Activated naive CD4-positive, alpha-beta T cell treated with anti-CD3 and anti-CD28 coated beads for 36 hours (primary cell): ENCODE measurements at regions of chr2 and their contacts with region 1.

Region 1: DNA sequence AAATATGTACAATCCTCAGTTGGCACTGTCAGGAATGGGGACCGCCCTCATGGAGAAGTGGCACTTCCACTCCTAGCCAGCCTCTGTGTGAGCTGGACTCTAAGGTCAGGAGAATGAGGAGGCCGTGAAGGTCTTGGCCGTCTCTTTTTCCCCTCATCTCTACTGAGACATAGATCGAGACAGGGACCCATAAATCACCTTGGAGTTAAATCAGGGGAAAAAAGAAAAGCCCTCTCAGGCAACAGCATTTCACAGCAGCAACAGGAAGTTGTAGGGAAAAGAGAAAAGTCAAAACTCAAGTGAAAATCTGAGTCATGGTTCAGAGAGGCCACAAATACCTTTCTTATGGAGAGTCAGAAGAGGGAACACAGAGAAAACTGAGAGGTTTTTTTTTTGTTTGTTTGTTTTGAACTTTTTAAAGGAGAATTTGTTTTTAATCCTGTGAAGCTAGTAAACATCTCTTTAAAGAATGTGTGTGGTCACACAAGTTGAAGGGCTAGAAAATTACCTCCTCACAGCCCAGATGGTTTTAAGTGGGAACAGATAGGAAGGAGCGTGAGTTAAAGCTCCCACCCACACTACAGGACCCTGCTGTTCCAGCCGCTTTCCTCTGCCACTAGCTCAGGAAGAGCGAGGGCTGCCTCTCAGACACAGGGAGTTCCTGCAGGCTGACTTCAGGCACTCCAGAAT is 30.6 kb upstream of the CYP1B1 start:
- DNase-seq: no peak
- H3K4me3 Mint-ChIP-seq: no peak overlapping the region
- H3K27ac Mint-ChIP-seq: no peak overlapping the region
- H3K4me1 Mint-ChIP-seq: peaks cover 14% of the 10 kb centered on the region
- H3K27me3 Mint-ChIP-seq: peaks cover 29% of the 10 kb centered on the region

Region 2: DNA sequence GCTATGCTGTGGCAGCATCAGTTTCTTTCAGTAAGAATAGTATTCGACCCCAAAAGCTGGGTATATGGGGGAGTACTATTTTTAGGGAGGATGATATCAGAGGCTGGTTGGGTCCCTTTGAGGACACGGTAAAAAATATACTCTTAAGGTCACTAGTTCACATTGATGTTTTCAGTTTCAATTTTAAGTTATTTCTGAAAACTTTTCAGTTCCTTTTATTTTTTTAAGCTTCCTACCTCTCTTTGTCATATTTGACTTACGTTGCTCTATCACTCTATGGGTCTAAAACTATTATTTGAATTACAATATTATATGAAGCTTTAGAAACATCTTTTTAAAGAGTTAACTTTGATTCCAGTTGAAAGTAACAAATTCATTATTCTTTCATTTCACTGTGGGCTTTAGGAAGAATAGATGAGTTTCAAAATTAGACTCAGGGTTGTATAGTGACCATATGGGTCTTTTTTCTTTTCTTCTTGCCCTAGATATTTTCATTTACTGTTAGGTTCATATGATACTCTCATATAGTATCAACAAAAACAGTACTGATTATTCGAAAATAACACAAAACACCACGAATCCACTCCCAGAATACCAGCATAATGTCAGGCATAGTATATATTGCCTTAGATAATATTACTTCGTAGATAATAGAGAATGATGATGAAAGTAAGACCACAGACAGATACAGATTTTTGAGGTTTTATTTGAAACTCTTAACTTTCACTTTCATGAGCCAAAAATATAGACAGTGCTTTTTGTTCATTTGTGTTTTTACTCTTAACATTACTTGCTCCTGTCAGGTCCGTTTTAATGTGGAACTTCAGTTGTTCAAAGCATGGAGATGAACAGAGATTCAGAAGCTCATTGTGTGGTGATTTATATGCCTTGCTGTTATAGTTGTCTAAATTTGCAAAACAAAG is 171.7 kb before region 1 on chr2:
- CTCF ChIA-PET with region 1: no interaction called
- intact Hi-C with region 1: loop called (anchors 1 kb)
- DNase-seq: no peak
- H3K4me3 Mint-ChIP-seq: peak overlapping the region; percentile 42
- H3K27ac Mint-ChIP-seq: no peak overlapping the region
- H3K4me1 Mint-ChIP-seq: peaks cover 25% of the 10 kb centered on the region
- H3K27me3 Mint-ChIP-seq: peaks cover 2% of the 10 kb centered on the region

Region 3: GRCh38 chr2:38037757-38038621 is 68.6 kb before region 1 on chr2:
- CTCF ChIA-PET with region 1: no interaction called
- intact Hi-C with region 1: loop called (anchors 1 kb)
- DNase-seq: peak; percentile 64
- H3K4me3 Mint-ChIP-seq: peak overlapping the region; percentile 68
- H3K27ac Mint-ChIP-seq: peak overlapping the region; percentile 76
- H3K4me1 Mint-ChIP-seq: peaks cover 16% of the 10 kb centered on the region
- H3K27me3 Mint-ChIP-seq: peaks cover 45% of the 10 kb centered on the region

Region 4: DNA sequence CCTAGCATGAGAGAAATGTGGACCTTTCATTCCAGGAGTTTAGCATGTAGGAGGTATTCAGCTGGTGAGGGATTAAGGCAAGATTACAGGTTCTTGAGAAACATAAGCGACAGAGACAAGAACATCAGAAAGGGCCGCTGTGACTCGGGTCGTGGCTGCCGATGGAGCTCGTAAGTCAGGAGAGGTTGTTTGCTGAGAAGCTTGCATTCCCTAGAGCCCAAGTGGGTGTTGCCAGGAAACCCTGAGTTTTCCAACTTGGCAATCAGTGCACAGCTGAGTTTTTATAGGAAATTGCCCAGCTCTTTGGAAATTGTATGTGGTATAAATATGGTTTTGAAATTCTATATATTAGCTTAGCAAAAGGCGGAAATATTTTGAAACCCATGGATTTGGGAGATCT is 15.8 kb after region 1 on chr2:
- CTCF ChIA-PET with region 1: interaction called, 11 read pairs
- intact Hi-C with region 1: no loop called
- DNase-seq: no peak
- H3K4me3 Mint-ChIP-seq: no peak overlapping the region
- H3K27ac Mint-ChIP-seq: no peak overlapping the region
- H3K4me1 Mint-ChIP-seq: no peaks in the 10 kb centered on the region
- H3K27me3 Mint-ChIP-seq: no peaks in the 10 kb centered on the region